ENCODE measurements at regions of chr17 and their contacts with region 1.

Region 1: DNA sequence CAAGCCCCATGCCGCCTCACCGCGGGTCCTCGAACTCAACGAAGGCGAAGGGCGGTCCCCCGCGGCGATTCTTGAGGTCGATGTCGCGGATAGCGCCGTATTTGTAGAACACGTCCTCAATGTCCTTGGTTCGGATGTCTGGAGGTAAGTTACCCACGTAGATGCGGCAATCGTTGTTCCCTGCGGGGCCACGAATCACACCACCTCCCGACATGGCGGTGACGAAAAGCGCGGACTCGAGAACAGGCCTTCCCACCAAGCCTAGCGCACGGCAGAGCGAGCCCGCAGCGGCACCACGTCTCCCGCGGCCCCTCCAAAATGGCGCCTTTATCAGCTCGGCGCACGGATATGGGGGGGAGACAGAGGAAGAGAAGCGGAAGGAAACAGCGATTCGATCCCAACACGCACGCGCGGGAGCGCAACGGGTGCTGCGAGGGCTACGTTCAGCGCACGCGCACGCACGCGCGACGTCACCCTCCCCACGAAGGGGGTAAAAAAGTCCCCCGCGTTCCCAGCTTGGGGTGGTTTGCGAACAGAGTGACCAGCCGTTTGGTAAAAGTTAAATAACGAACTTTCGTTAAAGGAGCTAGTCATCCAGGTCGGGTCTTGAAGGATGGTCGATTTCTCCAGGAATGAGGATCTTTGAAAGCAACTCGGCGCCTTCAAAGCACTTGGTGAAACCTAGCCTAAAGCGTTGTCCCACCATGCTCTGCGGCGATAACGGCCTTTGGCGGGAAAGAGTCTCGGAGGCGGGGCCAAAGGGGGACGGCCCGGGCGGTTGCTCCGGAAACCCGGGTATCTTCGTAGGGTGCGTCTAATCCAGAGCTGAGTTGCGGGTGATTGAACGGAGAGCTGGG is at the start of gene SRSF1:
- DNase-seq: peak; percentile 98
- H3K4me3 Mint-ChIP-seq: peak within 1 kb of the TSS; percentile 94
- H3K27ac Mint-ChIP-seq: peak within 1 kb of the TSS; percentile 98
- H3K4me1 Mint-ChIP-seq: peaks cover 50% of the 10 kb centered on the region
- H3K27me3 Mint-ChIP-seq: no peaks in the 10 kb centered on the region
- total RNA-seq, gene SRSF1: 363 to 365 TPM

Region 2: GRCh38 chr17:57987580-57988421 is 19.4 kb before region 1 on chr17 and contains the start of gene VEZF1:
- CTCF ChIA-PET with region 1: interaction called, 11 read pairs
- POLR2A ChIA-PET with region 1: interaction called, 4 read pairs
- DNase-seq: peak; percentile 83
- H3K4me3 Mint-ChIP-seq: peak within 1 kb of the TSS; percentile 90
- H3K27ac Mint-ChIP-seq: peak within 1 kb of the TSS; percentile 93
- H3K4me1 Mint-ChIP-seq: peaks cover 71% of the 10 kb centered on the region
- H3K27me3 Mint-ChIP-seq: no peaks in the 10 kb centered on the region
- total RNA-seq, gene VEZF1: 46.7 to 52.0 TPM

Region 3: DNA sequence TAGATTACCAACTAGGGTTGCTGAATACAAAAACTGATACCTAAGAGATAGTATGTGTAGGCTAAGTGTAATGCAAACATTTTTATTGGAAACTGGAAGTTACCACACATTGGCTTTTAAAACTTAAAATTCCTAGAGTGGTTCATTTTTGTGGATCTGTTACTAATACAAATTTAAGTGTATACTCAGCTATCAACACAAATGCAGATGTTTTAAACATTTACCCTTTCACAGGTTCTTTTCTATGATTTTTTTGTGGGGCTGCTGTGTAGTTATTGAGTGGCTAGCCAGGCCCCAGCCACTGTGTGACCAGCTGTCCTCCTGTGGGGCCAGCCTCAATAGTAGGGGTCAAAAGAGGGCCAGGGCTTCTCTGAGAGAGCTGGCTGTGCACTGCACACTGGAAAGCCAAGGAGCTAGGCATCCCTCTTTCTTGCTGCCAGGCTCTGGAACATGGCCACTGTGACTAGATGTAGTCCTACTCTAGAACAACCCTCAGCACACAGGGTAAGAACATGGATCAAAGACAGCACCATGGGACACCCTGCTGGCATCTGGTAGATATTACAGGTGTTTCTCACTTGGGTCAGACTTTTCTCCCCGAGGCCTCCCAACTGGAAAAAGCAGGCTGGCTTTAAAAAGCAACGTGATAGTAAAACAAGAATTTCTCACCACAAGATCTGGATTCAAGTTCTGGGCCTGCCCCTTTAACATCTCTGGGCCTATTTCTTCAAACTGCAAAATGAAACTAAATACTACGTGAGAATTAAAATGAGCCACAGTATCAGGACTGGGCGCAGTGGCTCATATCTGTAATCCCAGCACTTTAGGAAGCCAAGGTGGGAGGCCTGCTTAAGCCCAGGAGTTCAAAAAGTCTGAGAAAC is 11.8 kb before region 1 on chr17:
- CTCF ChIA-PET with region 1: interaction called, 15 read pairs
- POLR2A ChIA-PET with region 1: interaction called, 8 read pairs
- DNase-seq: peak; percentile 62
- H3K4me3 Mint-ChIP-seq: peak overlapping the region; percentile 3
- H3K27ac Mint-ChIP-seq: no peak overlapping the region
- H3K4me1 Mint-ChIP-seq: peaks cover 65% of the 10 kb centered on the region
- H3K27me3 Mint-ChIP-seq: no peaks in the 10 kb centered on the region